GM12878 (cell line): ENCODE measurements at regions of chr5 and their contacts with region 1.

Region 1: GRCh38 chr5:57298295-57298984 is 124.6 kb downstream of the GPBP1 start:
- DNase-seq: peak; percentile 34
- ATAC-seq: peak; percentile 94
- H3K4me3 ChIP-seq: 0 out of 2 replicates have a peak overlapping the region, but pooled peaks have one; percentile 18
- H3K27ac ChIP-seq: no peak overlapping the region
- H3K4me1 ChIP-seq: peaks cover 6% of the 10 kb centered on the region
- H3K27me3 ChIP-seq: no peaks in the 10 kb centered on the region
- CTCF ChIP-seq: peak; percentile 75 to 81 (median 76)
- EP300 ChIP-seq: no peak
- POLR2A ChIP-seq: no peak
- RAD21 ChIP-seq: peak; percentile 72

Region 2: DNA sequence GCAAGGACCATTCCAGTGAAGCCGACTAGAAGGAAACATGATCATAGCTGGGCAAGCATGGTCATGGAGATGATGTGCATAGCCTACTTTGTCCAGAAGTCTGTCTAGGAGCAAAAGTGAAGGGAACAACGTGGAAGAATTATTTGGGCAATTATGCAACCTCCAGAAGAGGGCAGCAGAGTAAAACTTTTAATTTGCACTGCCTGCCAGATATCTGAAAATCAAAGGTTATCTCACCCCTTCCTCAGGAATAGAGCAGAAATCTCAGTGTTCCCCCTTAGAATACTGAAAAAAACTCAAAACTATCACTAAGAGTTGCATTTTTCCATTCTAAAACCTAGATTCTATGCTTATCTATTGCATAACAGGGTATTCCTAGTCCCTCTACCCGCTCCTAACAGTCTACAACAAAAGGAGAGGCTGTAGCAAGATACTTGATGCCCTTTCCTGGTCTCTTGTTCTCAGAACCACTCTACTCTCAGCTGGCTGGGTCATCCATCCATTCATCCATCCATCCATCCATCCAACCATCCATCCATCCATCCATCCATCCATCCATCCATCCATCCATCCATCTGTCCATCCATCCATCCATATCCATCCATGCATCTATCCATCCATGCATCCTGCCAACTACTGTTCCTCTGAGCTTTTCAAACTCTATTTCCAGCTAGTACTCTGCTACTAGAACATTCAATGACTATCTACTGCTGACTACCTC is 397.4 kb before region 1 on chr5:
- CTCF ChIA-PET with region 1: interaction called, 15 read pairs
- POLR2A ChIA-PET with region 1: no interaction called
- RAD21 ChIA-PET with region 1: no interaction called
- SMC1A ChIA-PET with region 1: interaction called, 9 read pairs
- in situ Hi-C with region 1: no loop called
- intact Hi-C with region 1: loop called (anchors 2 kb)
- DNase-seq: no peak
- ATAC-seq: peak; percentile 88
- H3K4me3 ChIP-seq: no peak overlapping the region
- H3K27ac ChIP-seq: no peak overlapping the region
- H3K4me1 ChIP-seq: no peaks in the 10 kb centered on the region
- H3K27me3 ChIP-seq: no peaks in the 10 kb centered on the region; a peak in 1 of 4 replicates
- CTCF ChIP-seq: peak; percentile 60 to 83 (median 75); a peak in 5 of 6 replicates
- EP300 ChIP-seq: no peak
- POLR2A ChIP-seq: no peak
- RAD21 ChIP-seq: peak; percentile 89

Region 3: DNA sequence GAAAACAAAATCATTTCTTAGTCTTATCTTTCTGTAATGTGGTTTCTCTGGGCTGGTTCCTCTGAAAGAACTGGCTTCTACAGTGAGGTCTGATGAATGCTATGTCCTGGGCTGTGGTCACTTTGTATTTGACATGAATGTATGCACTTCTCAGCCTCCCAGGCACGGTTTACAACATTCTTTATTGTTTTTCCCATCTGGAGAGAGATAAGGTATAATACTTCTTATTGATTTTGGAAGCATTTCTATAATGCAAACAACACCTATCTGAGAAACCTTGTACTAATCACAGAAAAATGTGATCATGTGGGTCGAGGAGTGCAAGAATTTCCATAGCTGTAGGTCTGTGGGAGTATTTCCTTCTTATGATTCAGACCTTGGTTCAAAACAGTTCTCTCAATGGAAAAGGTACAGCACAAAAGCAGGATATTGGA is 137.3 kb after region 1 on chr5:
- CTCF ChIA-PET with region 1: interaction called, 11 read pairs
- POLR2A ChIA-PET with region 1: no interaction called
- RAD21 ChIA-PET with region 1: interaction called, 3 read pairs
- SMC1A ChIA-PET with region 1: interaction called, 3 read pairs
- in situ Hi-C with region 1: no loop called
- intact Hi-C with region 1: loop called (anchors 2 kb)
- DNase-seq: no peak
- ATAC-seq: no peak
- H3K4me3 ChIP-seq: no peak overlapping the region
- H3K27ac ChIP-seq: no peak overlapping the region
- H3K4me1 ChIP-seq: no peaks in the 10 kb centered on the region
- H3K27me3 ChIP-seq: peaks cover 1 to 5% of the 10 kb centered on the region in 2 experiments; a peak in 1 of 4 replicates
- CTCF ChIP-seq: no peak
- EP300 ChIP-seq: no peak
- POLR2A ChIP-seq: no peak
- RAD21 ChIP-seq: no peak

Region 4: DNA sequence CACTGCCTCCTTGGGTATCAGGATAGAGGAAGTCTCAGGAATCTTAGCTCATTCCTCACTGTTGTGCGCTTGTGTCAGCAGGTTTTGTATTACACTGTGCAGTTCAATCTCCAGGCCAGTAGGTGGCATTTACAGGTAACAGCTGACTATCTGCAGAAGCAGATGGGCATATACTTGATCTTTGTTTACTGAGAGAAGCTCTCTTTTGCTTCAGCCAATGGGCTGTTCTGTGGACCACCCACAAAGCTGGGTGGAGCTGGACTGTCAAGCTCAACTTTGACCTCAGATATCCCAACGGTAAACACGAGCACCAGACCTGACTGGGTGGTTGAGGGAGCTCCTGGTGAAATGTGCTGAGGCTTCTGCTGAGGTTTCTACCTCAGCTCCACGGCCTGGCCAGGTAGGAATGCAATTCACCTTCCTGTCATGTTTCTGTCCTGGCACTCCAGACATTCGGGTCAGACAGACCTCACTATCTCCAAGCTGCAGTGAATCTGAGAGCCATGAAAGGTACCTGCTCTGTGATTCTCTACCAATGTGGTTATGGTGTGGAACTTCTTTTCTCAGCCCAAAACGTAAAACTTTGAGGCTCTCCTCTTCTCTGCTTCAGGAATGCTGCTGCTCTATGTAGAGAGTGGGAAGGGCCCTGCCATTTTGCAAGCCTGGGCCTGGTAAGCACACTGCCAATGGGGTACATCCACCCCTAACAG is 352.1 kb after region 1 on chr5:
- CTCF ChIA-PET with region 1: interaction called, 12 read pairs
- POLR2A ChIA-PET with region 1: no interaction called
- RAD21 ChIA-PET with region 1: interaction called, 3 read pairs
- SMC1A ChIA-PET with region 1: interaction called, 8 read pairs
- in situ Hi-C with region 1: no loop called
- intact Hi-C with region 1: no loop called
- DNase-seq: peak; percentile 16
- ATAC-seq: peak; percentile 93
- H3K4me3 ChIP-seq: no peak overlapping the region
- H3K27ac ChIP-seq: no peak overlapping the region
- H3K4me1 ChIP-seq: no peaks in the 10 kb centered on the region
- H3K27me3 ChIP-seq: no peaks in the 10 kb centered on the region
- CTCF ChIP-seq: peak; percentile 71 to 77 (median 75)
- EP300 ChIP-seq: no peak
- POLR2A ChIP-seq: no peak
- RAD21 ChIP-seq: peak; percentile 59

Region 5: GRCh38 chr5:57779383-57780223 is 481.2 kb after region 1 on chr5:
- CTCF ChIA-PET with region 1: interaction called, 7 read pairs
- POLR2A ChIA-PET with region 1: no interaction called
- RAD21 ChIA-PET with region 1: interaction called, 3 read pairs
- SMC1A ChIA-PET with region 1: interaction called, 6 read pairs
- in situ Hi-C with region 1: no loop called
- intact Hi-C with region 1: loop called (anchors 5 kb)
- DNase-seq: no peak
- ATAC-seq: peak; percentile 83
- H3K4me3 ChIP-seq: no peak overlapping the region
- H3K27ac ChIP-seq: no peak overlapping the region
- H3K4me1 ChIP-seq: no peaks in the 10 kb centered on the region
- H3K27me3 ChIP-seq: peaks cover 0 to 2% of the 10 kb centered on the region in 2 experiments; a peak in 1 of 4 replicates
- CTCF ChIP-seq: peak; percentile 40 to 55 (median 45); a peak in 5 of 6 replicates
- EP300 ChIP-seq: no peak
- POLR2A ChIP-seq: no peak
- RAD21 ChIP-seq: peak; percentile 73

Region 6: DNA sequence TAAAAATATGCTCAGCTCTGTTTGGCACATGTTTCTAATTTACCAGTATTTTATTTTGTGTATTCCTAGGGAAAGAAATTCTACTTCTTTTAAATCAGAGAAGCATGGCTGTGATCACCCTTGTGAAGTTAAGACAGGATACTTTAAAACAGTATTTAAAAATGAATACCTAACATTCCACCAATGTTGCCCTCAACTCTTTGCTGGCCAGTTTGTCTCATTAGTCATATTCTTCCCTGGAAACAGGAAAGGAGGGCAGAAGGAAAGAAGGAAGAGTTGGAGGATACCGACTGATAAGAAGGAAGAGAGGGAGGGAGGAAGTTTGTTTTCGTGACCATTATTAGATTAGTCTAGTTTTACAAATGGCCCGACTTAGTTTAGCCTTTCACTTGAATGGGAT is 1024.0 kb after region 1 on chr5:
- CTCF ChIA-PET with region 1: no interaction called
- POLR2A ChIA-PET with region 1: no interaction called
- RAD21 ChIA-PET with region 1: no interaction called
- SMC1A ChIA-PET with region 1: no interaction called
- in situ Hi-C with region 1: no loop called
- intact Hi-C with region 1: no loop called
- DNase-seq: no peak
- ATAC-seq: no peak
- H3K4me3 ChIP-seq: no peak overlapping the region
- H3K27ac ChIP-seq: no peak overlapping the region
- H3K4me1 ChIP-seq: no peaks in the 10 kb centered on the region
- H3K27me3 ChIP-seq: no peaks in the 10 kb centered on the region
- CTCF ChIP-seq: no peak
- EP300 ChIP-seq: no peak
- POLR2A ChIP-seq: no peak
- RAD21 ChIP-seq: no peak